ENCODE measurements at regions of chr2 and their contacts with region 1.

Region 1: DNA sequence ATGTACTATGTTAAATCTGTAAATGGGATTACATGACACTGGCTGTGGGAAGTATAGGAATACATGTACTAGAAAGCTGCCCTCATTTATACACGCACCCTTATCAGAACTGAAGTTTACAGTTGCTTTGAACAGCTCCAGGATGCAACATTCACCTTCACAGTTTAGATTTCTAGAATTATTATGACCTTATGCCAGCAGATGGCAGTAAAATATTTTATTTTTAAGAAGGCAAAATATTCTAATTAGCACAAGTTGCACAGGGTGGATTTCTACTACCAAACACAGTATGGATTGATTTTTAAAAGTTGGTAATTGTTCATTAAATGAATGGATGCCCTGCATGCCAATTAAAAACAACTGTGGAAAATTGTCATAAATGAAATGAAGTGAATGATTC is 670.4 kb downstream of the KCNJ3 start:
- DNase-seq: no peak
- ATAC-seq: no peak
- H3K4me3 Mint-ChIP-seq: no peak overlapping the region
- H3K27ac Mint-ChIP-seq: no peak overlapping the region
- H3K4me1 Mint-ChIP-seq: no peaks in the 10 kb centered on the region
- H3K27me3 Mint-ChIP-seq: no peaks in the 10 kb centered on the region
- CTCF ChIP-seq: no peak

Region 2: DNA sequence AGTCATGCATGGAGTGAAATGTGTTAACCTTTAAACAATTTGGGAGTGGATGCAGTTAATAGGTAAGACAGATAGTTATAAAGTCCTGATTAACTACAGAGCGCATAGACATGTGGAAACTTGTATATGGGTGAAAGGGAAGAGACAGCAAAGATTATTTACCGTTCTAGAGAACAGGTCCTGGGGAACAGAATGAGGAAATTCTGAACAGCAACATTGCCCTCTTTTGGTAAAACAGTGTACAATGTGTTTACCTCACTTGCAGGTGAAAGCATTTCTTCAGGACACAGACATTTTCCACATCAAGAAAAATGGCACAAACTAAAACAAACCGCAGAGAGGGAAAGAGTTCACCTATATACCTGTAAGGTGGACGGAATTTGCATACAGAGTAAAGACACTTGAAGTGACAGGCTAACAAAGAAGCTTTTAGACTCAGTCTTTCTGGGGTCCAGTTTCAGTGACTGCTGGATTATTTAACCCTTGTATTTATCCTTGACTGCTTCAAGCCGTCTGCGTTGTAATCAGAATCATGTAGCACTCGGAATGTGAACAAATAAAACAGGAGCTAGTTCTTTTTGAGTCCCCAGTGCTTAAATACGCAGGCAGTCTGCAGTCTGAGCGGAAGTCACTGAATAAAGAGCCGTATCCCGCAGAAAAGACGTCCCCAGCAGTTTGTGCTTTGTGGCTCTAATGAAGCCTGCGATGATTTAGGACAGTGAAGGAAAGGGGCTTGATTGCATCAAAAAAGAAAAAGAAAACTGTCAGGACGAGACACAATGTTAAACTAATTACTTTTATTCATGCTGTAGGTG is 1523.7 kb after region 1 on chr2:
- CTCF ChIA-PET with region 1: no interaction called
- POLR2A ChIA-PET with region 1: no interaction called
- intact Hi-C with region 1: loop called (anchors 1 kb)
- DNase-seq: no peak
- ATAC-seq: no peak
- H3K4me3 Mint-ChIP-seq: no peak overlapping the region
- H3K27ac Mint-ChIP-seq: no peak overlapping the region
- H3K4me1 Mint-ChIP-seq: no peaks in the 10 kb centered on the region
- H3K27me3 Mint-ChIP-seq: peaks cover 8% of the 10 kb centered on the region
- CTCF ChIP-seq: no peak

Region 3: DNA sequence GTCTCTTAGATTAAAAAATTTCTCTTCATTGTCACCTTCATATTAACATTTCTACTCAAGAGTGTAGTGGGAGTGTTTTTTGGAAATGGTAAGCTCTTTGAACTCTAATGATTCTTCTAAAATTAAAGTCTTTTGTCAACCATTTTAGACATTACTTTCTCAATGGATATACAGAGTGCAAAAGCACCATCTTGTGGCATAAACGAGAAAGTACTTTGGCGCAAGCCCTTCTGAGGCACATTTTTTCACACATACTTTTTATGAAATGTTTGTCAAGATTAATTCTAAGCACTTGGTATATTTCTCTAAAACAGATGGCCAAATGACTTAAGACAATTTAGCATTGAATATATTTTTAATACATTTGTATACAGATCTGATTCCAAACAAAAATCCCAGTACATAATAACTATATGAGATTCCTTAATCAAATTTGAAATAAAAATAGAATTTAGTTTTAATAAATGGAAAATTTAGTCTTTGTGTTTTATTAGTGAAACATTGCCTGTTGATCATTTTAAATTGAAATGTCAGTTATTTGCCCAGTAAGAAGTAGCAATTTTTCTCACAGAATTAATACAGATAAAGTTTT is 1825.3 kb after region 1 on chr2:
- CTCF ChIA-PET with region 1: no interaction called
- POLR2A ChIA-PET with region 1: no interaction called
- intact Hi-C with region 1: loop called (anchors 1 kb)
- DNase-seq: no peak
- ATAC-seq: no peak
- H3K4me3 Mint-ChIP-seq: no peak overlapping the region
- H3K27ac Mint-ChIP-seq: no peak overlapping the region
- H3K4me1 Mint-ChIP-seq: no peaks in the 10 kb centered on the region
- H3K27me3 Mint-ChIP-seq: peaks cover 6% of the 10 kb centered on the region
- CTCF ChIP-seq: no peak

Measured in activated B cell treated with CpG ODN at 0.5 μM for 24 hours (primary cell).